Common myeloid progenitor, CD34-positive (primary cell): ENCODE measurements at regions of chr1 and their contacts with region 1.

Region 1: DNA sequence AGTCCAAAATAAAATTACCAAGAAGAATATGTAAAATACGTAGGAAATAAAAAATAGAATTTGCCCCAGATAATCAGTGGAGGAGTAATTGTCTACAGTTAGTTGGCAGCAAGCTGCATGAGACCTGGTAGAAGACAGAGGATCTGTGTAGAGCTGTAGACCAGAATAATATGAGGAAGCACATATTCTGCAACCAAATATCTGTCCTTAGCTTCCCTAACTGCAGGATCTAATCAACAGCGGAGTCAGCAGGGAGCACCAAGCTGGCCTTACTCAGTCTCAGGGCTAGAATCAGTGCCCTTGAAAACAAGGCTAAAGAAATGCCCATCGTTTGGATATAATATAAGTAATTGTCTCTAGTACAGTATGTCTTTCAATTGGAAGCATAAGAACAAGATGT is 6.1 kb upstream of the GCSAML start:
- DNase-seq: peak in 1 of 3 donors; percentile 57
- H3K4me3 ChIP-seq: no peak overlapping the region
- H3K27ac ChIP-seq: no peak overlapping the region
- H3K4me1 ChIP-seq: peaks cover 27 to 61% (median 46%) of the 10 kb centered on the region in 4 experiments
- H3K27me3 ChIP-seq: no peaks in the 10 kb centered on the region

Region 2: GRCh38 chr1:247322849-247323586 is 219.8 kb before region 1 on chr1:
- CTCF ChIA-PET with region 1: no interaction called
- POLR2A ChIA-PET with region 1: no interaction called
- DNase-seq: peak; percentile 39 to 84 (median 77)
- H3K4me3 ChIP-seq: peak overlapping the region in 5 of 7 experiments; percentile 1 to 54 (median 24)
- H3K27ac ChIP-seq: peak overlapping the region; percentile 9 to 73
- H3K4me1 ChIP-seq: peaks cover 29 to 57% (median 50%) of the 10 kb centered on the region in 4 experiments
- H3K27me3 ChIP-seq: no peaks in the 10 kb centered on the region

Region 3: GRCh38 chr1:247448107-247448791 is 94.6 kb before region 1 on chr1:
- CTCF ChIA-PET with region 1: no interaction called
- POLR2A ChIA-PET with region 1: no interaction called
- DNase-seq: peak; percentile 28 to 71 (median 61)
- H3K4me3 ChIP-seq: peak overlapping the region in 4 of 7 experiments; percentile 24 to 73 (median 60)
- H3K27ac ChIP-seq: peak overlapping the region; percentile 47 to 71
- H3K4me1 ChIP-seq: peaks cover 0 to 5% (median 1%) of the 10 kb centered on the region in 4 experiments
- H3K27me3 ChIP-seq: no peaks in the 10 kb centered on the region

Region 4: DNA sequence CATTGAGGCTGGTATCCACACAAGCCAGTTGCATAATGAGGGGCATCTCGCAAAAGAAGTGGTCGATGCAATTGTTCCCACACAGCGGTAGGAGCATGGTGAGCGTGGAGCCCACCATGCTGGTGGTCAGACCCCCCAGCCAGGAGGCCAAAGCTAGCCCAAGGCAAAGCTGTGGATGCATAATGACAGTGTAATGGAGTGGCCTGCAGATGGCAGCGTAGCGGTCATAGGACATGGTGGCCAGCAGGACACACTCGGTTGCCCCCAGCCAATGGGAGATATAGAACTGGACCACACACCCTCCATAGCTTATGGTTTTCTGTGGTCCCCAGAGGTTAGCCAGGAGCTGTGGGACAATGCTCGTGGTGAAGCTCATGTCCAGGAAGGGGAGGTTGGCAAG is 10.9 kb before region 1 on chr1:
- CTCF ChIA-PET with region 1: interaction called, 14 read pairs
- POLR2A ChIA-PET with region 1: interaction called, 3 read pairs
- DNase-seq: no peak
- H3K4me3 ChIP-seq: no peak overlapping the region
- H3K27ac ChIP-seq: no peak overlapping the region
- H3K4me1 ChIP-seq: peaks cover 0 to 27% (median 10%) of the 10 kb centered on the region in 4 experiments
- H3K27me3 ChIP-seq: no peaks in the 10 kb centered on the region

Region 5: GRCh38 chr1:247557926-247558674 is 15.3 kb after region 1 on chr1:
- CTCF ChIA-PET with region 1: no interaction called
- POLR2A ChIA-PET with region 1: no interaction called
- DNase-seq: no peak
- H3K4me3 ChIP-seq: peak overlapping the region in 1 of 7 experiments; percentile 13
- H3K27ac ChIP-seq: no peak overlapping the region
- H3K4me1 ChIP-seq: peaks cover 0 to 33% (median 5%) of the 10 kb centered on the region in 4 experiments
- H3K27me3 ChIP-seq: no peaks in the 10 kb centered on the region